Common myeloid progenitor, CD34-positive (primary cell): ENCODE measurements at regions of chr6 and their contacts with region 1.

Region 1: DNA sequence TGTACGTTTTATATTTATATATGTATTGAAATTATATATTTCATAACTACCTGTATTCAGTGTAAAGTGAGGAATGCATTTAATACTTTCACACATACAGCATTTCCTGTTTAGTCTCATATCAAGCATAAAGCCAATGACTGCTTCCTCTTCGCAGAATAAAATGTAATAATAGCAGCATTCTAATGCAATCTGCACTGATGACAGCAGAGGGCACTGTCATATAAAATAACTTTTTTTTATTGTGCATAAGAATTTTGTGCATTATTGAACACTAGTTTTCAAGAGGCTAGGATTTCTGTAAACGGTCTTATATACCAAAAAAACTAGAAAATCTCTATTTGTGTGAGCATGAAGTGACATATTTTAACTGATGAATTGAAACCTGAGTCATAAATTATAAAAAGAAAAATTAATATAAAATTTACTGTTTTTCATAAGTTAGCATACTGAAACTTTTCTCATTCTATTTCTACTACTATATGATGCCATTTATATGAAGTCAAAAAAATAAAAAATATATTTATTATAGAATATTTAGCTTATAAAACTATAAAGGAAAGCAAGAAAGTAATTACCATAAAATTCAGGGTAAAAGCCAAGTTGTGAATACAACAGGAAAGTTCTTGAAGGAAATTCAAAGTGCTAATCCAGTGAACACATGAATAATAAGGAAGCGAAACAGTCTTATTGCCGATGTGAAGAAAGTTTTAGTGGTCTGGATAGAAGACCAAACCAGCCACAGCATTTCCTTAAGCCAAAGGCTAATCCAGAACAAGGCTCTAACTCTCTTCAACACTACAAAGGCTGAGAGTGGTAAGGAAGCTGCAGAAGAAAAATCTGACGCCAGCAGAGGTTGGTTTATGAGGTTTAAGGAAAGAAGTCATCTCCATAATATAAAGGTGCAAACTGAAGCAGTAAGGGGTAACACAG is 36.3 kb downstream of the RNF146 start:
- DNase-seq: peak; percentile 58 to 83 (median 81)
- H3K4me3 ChIP-seq: no peak overlapping the region
- H3K27ac ChIP-seq: no peak overlapping the region
- H3K4me1 ChIP-seq: no peaks in the 10 kb centered on the region
- H3K27me3 ChIP-seq: no peaks in the 10 kb centered on the region

Region 2: DNA sequence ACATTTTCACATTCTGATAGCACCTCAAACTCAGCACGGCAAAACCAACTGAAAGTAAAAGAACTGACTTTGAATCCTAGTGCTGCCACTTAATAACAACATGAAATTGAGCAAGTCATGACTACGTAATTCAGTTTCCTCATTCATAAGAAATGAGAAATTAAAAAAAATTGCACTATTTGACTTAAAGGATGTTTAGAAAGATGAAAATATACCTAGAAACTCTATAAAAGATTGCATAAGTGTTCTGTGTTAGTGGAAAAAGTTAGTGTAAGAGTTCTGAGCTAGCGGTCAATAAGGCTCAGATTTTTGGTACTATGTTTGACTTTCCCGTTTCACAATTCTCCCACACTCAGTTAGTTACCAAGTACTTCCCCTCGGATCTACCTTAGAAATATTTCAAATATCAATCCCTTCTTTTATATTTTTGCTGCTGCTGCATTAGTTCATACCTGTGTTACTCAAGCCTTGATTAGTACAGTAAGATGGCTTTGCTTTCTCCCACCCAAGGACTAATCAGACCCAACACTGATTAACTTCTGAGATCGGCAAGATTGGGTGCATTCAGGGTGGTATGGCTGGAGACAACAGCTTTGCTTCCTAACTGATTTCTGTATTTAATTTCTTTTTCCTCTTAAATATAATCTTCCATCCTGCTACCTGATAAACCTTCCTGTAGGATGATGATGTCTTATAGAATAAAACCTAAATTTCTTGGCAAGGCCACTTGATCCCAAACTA is 14.6 kb after region 1 on chr6:
- CTCF ChIA-PET with region 1: interaction called, 16 read pairs
- POLR2A ChIA-PET with region 1: interaction called, 3 read pairs
- DNase-seq: no peak
- H3K4me3 ChIP-seq: peak overlapping the region in 1 of 7 experiments; percentile 44
- H3K27ac ChIP-seq: no peak overlapping the region
- H3K4me1 ChIP-seq: no peaks in the 10 kb centered on the region
- H3K27me3 ChIP-seq: no peaks in the 10 kb centered on the region

Region 3: GRCh38 chr6:127376685-127377084 is 73.7 kb after region 1 on chr6:
- CTCF ChIA-PET with region 1: no interaction called
- POLR2A ChIA-PET with region 1: no interaction called
- DNase-seq: no peak
- H3K4me3 ChIP-seq: no peak overlapping the region
- H3K27ac ChIP-seq: no peak overlapping the region
- H3K4me1 ChIP-seq: peaks cover 0 to 6% (median 0%) of the 10 kb centered on the region in 4 experiments
- H3K27me3 ChIP-seq: no peaks in the 10 kb centered on the region

Region 4: DNA sequence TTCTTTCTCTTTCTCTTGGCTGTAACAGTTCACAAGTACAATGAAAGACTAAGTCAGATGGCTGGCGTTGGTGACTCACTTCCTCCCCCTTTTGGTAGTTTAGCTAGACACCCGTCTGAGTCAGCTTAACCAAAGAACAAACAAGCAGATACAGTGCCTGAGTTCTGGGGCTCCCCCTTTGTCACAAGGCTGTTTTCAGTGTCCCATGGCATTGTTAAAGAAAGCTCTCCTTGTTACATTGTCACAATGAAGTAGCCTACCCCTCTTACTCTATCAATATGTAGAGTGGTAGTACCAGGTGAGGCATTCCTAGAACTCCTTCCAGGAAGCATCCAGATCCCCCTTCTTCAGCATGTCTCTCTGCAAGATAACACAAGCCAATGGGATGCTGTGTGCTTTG is 117.6 kb after region 1 on chr6:
- CTCF ChIA-PET with region 1: interaction called, 16 read pairs
- POLR2A ChIA-PET with region 1: no interaction called
- DNase-seq: peak; percentile 84 to 97 (median 96)
- H3K4me3 ChIP-seq: no peak overlapping the region
- H3K27ac ChIP-seq: no peak overlapping the region
- H3K4me1 ChIP-seq: peaks cover 0 to 4% (median 3%) of the 10 kb centered on the region in 4 experiments
- H3K27me3 ChIP-seq: no peaks in the 10 kb centered on the region